Activated CD8-positive, alpha-beta T cell treated with anti-CD3 and anti-CD28 coated beads, Interleukin-2, amount 10 ng/mL, durations not matched to agents 7 days and 5 days (primary cell): ENCODE measurements at regions of chr17 and their contacts with region 1.

Region 1: DNA sequence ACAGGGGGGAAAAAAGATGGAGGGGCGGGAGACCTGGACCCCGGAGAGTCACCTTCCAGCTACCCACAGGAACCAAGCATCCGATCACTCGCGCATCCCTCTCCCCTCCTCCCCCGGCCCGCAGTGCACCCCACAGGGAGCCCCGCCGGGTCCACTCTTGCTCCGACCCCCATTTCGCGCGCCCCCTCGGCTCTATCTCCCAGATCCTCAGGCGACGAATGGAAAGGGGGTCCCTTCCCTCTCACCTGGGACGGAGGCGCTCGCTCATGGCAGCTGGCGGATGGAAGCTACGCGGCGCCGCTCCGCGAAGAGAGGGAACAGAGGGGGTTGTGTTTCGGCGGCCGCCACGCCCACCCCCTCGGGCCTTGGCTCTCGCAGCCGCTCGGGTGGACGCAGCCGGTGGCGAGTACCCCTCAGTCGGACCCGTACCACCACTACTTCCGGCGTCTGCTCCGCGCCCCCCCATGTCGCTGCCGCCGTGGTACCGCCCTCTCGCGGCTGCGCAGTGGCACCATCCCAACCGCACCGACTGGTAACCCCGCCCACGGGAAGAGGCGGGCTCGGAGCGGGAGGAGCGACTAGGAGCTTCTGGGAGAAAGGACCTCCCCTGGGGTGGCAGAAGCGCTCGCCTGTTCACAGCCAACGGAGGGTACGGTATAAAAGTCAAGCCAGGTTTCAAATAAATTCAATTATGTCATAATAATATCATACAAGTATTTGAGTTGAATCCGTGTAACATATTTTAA is 29.7 kb downstream of the CPSF4L start:
- DNase-seq: peak; percentile 97
- ATAC-seq: peak; percentile 92
- H3K4me3 Mint-ChIP-seq: peak overlapping the region; percentile 82
- H3K27ac Mint-ChIP-seq: peak overlapping the region; percentile 96
- H3K4me1 Mint-ChIP-seq: peaks cover 57% of the 10 kb centered on the region
- H3K27me3 Mint-ChIP-seq: no peaks in the 10 kb centered on the region

Region 2: DNA sequence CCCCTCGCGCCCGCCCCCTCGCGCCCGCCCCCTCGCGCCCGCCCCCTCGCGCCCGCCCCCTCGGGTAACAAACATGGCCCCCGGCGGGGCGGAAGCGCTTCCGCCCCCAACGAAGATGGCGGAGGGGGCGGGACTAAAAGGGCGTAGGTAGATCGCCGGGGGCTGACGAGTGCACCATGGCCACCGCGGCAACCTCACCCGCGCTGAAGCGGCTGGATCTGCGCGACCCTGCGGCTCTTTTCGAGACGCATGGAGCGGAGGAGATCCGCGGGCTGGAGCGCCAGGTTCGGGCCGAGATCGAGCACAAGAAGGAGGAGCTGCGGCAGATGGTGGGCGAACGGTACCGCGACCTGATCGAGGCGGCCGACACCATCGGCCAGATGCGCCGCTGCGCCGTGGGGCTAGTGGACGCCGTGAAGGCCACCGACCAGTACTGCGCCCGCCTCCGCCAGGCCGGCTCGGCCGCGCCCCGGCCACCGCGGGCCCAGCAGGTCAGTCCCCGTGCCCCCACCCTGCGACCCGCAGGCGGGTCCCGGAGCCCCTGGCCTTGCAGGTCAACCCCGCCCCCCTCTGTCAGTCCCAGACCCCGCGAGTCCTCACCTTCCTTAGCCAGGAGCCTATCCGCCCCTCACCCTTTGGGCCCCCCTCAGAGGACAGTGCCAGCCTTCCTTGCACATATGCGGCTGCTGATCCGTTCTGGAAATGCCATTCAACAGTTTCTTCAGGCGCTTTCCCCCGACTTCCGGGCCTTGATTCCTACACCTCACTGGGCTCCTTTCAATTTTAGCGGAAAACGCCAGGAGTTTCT is 38.9 kb before region 1 on chr17 and contains the start of gene COG1:
- CTCF ChIA-PET with region 1: interaction called, 26 read pairs
- POLR2A ChIA-PET with region 1: interaction called, 46 read pairs
- DNase-seq: peak; percentile 90
- ATAC-seq: peak; percentile 84
- H3K4me3 Mint-ChIP-seq: peak within 1 kb of the TSS; percentile 95
- H3K27ac Mint-ChIP-seq: peak within 1 kb of the TSS; percentile 97
- H3K4me1 Mint-ChIP-seq: peaks cover 34% of the 10 kb centered on the region
- H3K27me3 Mint-ChIP-seq: no peaks in the 10 kb centered on the region
- total RNA-seq, gene COG1: 25.2 to 30.5 TPM

Region 3: GRCh38 chr17:73203135-73203787 is 28.8 kb before region 1 on chr17:
- CTCF ChIA-PET with region 1: interaction called, 5 read pairs
- POLR2A ChIA-PET with region 1: interaction called, 13 read pairs
- DNase-seq: peak; percentile 26
- ATAC-seq: peak; percentile 34
- H3K4me3 Mint-ChIP-seq: no peak overlapping the region
- H3K27ac Mint-ChIP-seq: peak overlapping the region; percentile 66
- H3K4me1 Mint-ChIP-seq: peaks cover 30% of the 10 kb centered on the region
- H3K27me3 Mint-ChIP-seq: no peaks in the 10 kb centered on the region

Region 4: GRCh38 chr17:73215447-73215846 is 16.6 kb before region 1 on chr17:
- CTCF ChIA-PET with region 1: interaction called, 30 read pairs
- POLR2A ChIA-PET with region 1: interaction called, 7 read pairs
- DNase-seq: no peak
- ATAC-seq: no peak
- H3K4me3 Mint-ChIP-seq: no peak overlapping the region
- H3K27ac Mint-ChIP-seq: no peak overlapping the region
- H3K4me1 Mint-ChIP-seq: peaks cover 27% of the 10 kb centered on the region
- H3K27me3 Mint-ChIP-seq: no peaks in the 10 kb centered on the region

Region 5: DNA sequence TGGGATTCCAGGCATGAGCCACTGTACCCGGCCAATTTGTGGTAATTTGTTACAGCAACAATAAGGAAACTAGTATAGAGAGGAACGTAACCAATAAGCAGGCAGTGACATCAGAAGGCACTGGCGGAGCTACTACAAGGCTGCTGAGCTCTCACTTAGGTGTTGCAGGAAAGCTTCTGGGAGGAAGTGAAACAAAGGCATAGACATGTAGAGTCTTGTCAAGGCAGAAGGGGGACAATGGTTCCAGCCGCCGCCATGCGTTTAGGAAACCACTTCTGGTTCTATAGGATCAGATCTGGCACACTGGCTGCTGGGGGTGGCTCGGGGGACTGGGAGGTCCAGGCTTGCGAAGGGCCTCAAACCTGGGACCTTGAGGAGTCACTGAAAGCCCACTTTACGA is 39.1 kb after region 1 on chr17:
- CTCF ChIA-PET with region 1: no interaction called
- POLR2A ChIA-PET with region 1: no interaction called
- DNase-seq: no peak
- ATAC-seq: no peak
- H3K4me3 Mint-ChIP-seq: no peak overlapping the region
- H3K27ac Mint-ChIP-seq: no peak overlapping the region
- H3K4me1 Mint-ChIP-seq: no peaks in the 10 kb centered on the region
- H3K27me3 Mint-ChIP-seq: peaks cover 3% of the 10 kb centered on the region

Region 6: GRCh38 chr17:73420895-73421294 is 188.9 kb after region 1 on chr17:
- CTCF ChIA-PET with region 1: no interaction called
- POLR2A ChIA-PET with region 1: no interaction called
- DNase-seq: no peak
- ATAC-seq: no peak
- H3K4me3 Mint-ChIP-seq: no peak overlapping the region
- H3K27ac Mint-ChIP-seq: no peak overlapping the region
- H3K4me1 Mint-ChIP-seq: peaks cover 2% of the 10 kb centered on the region
- H3K27me3 Mint-ChIP-seq: no peaks in the 10 kb centered on the region